T-cell (primary cell): ENCODE measurements at regions of chr7 and their contacts with region 1.

Region 1: DNA sequence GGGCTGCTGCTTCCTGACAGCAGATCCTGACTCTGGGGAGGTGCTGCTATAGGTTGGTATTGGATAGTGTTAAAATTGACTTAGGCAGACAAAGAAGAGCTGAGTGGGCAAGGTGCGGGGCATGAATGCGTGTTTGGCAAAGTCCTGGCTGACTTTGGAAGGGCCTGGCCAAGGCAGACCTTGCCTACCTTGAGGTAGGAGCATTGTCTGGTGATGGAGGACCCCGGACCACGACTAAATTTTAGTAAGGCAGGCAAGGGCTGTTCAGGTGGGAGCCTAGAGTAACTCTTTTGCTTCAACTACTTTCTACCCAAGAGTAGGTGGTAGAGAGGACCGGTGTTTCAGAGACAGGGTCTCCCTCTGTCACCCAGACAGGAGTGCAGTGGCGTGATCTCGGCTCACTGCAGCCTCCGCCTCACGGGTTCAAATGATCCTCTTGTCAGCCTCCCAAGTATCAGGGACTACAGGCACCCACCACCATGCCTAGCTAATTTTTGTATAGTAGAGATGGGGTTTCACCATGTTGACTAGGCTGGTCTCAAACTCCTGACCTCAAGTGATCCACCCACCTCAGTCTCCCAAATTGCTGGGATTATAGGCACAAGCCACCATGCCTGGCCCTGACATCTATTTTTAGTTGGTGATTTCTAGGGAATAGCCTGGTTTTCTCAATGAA is 12.2 kb upstream of the LAT2 start:
- DNase-seq: no peak
- ATAC-seq: peak in 1 of 4 experiments; percentile 28
- H3K4me3 ChIP-seq: no peak overlapping the region
- H3K4me3 Mint-ChIP-seq: no peak overlapping the region
- H3K27ac ChIP-seq: no peak overlapping the region
- H3K27ac Mint-ChIP-seq: peak overlapping the region; percentile 16 to 61
- H3K4me1 ChIP-seq: peaks cover 0 to 17% of the 10 kb centered on the region in 2 experiments
- H3K4me1 Mint-ChIP-seq: peaks cover 8 to 15% (median 10%) of the 10 kb centered on the region in 3 donors
- H3K27me3 ChIP-seq: no peaks in the 10 kb centered on the region
- H3K27me3 Mint-ChIP-seq: no peaks in the 10 kb centered on the region

Region 2: DNA sequence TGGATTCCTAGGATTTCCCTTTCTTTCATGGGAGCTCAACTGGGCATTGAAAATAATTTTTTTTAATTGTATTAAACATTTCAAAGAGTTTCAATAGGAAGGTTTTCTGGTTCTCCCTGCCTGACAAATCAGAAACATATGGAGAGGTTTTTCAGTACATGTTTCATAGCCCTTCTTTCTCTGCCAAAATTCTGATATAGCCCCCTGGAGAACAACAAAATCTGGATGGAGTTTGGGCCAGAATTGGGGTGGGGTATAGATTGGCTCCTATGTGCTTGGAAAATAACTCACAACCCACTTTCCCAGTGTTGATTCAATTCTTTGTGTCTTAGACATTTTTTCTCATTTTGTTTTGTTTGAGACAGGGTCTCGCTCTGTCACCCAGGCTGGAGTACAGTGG is 48.0 kb before region 1 on chr7:
- CTCF ChIA-PET with region 1: no interaction called
- POLR2A ChIA-PET with region 1: no interaction called
- DNase-seq: no peak
- ATAC-seq: no peak
- H3K4me3 ChIP-seq: no peak overlapping the region
- H3K4me3 Mint-ChIP-seq: no peak overlapping the region
- H3K27ac ChIP-seq: no peak overlapping the region
- H3K27ac Mint-ChIP-seq: no peak overlapping the region
- H3K4me1 ChIP-seq: no peaks in the 10 kb centered on the region
- H3K4me1 Mint-ChIP-seq: no peaks in the 10 kb centered on the region
- H3K27me3 ChIP-seq: peaks cover 0 to 8% of the 10 kb centered on the region in 2 experiments
- H3K27me3 Mint-ChIP-seq: peaks cover 0 to 3% of the 10 kb centered on the region in 2 donors

Region 3: DNA sequence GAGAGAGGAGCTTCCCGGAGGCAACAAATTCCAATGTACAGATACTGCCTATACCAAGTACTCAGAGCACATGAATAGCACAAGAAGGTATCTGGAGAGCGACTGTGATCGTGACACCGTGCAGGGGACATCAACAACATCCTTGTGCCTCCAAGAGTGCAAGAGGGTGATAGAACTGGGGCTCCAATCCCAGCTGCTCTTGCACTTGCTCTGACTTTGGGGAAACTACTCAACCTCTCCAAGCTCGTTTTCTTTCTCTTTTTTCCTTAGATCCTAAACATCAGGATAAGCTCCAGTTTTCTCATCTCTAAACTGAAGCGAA is 44.5 kb after region 1 on chr7:
- CTCF ChIA-PET with region 1: no interaction called
- POLR2A ChIA-PET with region 1: interaction called in 1 of 2 experiments, 10 read pairs
- DNase-seq: no peak
- ATAC-seq: no peak
- H3K4me3 ChIP-seq: no peak overlapping the region
- H3K4me3 Mint-ChIP-seq: no peak overlapping the region
- H3K27ac ChIP-seq: no peak overlapping the region
- H3K27ac Mint-ChIP-seq: no peak overlapping the region
- H3K4me1 ChIP-seq: no peaks in the 10 kb centered on the region
- H3K4me1 Mint-ChIP-seq: peaks cover 0 to 8% (median 2%) of the 10 kb centered on the region in 3 donors
- H3K27me3 ChIP-seq: no peaks in the 10 kb centered on the region
- H3K27me3 Mint-ChIP-seq: no peaks in the 10 kb centered on the region

Region 4: DNA sequence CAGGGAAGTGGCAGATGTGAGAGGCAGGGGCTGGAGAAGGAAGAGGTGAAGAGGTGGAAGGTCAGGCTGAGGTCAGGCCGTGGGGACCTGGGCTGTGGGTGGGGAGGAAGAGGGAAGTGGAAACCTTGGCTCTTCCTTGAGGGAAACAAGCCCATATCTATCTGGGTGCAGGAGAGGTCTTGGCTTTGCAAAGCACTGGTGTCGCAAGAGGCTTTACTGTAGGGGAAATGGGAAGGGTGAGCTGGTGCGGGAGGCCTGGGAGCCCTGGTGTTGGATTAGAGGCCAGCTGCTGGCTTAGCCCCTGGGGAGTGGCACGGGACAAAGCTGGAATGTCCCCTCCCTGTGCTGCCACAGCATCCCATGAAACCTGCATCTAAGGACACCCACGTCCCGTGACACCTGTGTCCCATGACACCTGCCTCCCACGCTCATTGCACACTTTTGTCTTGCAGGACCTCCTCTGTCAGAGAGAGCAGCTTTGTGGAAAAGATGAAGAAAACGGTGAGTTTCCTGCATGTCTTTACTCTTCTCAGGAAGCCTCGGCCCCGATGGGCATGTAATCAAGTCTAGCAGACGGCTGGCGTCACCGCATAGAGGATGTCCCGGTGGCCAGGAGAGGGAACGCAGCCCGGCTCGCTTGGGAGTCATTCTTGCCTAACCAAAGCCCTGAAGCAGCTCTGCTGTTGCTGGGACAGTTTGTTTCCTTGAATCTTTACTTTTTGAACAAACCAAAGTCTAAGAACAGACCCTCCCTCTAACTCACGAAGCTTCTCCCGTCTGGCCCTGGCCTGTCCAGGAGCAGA is 1774.6 kb after region 1 on chr7:
- CTCF ChIA-PET with region 1: no interaction called
- POLR2A ChIA-PET with region 1: no interaction called
- DNase-seq: no peak
- ATAC-seq: no peak
- H3K4me3 ChIP-seq: no peak overlapping the region
- H3K4me3 Mint-ChIP-seq: no peak overlapping the region
- H3K27ac ChIP-seq: no peak overlapping the region
- H3K27ac Mint-ChIP-seq: no peak overlapping the region
- H3K4me1 ChIP-seq: no peaks in the 10 kb centered on the region
- H3K4me1 Mint-ChIP-seq: peaks cover 0 to 6% (median 0%) of the 10 kb centered on the region in 3 donors
- H3K27me3 ChIP-seq: no peaks in the 10 kb centered on the region
- H3K27me3 Mint-ChIP-seq: no peaks in the 10 kb centered on the region